GM13977 (cell line): ENCODE measurements at regions of chrX and their contacts with region 1.

Region 1: DNA sequence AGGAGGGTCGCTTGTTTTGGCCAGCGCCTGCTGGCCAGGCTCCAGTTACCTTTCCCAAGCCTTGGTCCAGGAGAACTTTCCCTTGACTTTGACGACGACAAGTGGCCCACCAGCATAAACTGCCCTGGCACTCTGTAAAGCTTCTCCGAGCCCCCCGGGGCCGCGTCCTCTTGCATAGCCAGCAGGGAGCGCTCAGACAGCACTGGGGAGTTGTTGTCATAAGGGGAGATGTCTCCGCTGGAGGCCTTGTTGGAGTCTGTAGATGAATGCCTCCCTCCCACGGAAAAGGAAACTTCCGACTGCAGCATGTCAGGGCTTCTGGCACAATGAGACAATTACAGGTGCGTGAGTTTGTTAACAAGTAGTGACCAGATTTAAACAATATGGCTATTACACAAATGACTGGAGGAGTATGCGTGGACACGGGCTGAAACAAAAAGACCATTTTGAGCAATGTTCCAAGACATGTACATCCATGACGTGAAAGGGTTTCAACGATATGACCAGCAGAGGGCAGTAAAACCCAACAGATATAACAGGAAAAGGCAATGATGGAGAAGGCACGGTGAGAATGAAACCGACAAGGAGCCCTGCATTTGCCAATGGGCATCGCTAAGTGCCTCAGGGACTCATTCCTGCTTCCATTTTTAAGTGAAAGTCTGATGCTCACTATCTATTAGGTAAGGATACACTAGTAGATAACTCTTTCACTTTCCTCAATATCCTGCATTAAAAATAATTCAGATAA is 33.0 kb downstream of the HCCS start:
- DNase-seq: peak; percentile 75
- CTCF ChIP-seq: peak; percentile 72

Region 2: GRCh38 chrX:11040405-11040804 is 103.7 kb before region 1 on chrX:
- in situ Hi-C with region 1: no loop called
- DNase-seq: no peak
- CTCF ChIP-seq: no peak

Region 3: DNA sequence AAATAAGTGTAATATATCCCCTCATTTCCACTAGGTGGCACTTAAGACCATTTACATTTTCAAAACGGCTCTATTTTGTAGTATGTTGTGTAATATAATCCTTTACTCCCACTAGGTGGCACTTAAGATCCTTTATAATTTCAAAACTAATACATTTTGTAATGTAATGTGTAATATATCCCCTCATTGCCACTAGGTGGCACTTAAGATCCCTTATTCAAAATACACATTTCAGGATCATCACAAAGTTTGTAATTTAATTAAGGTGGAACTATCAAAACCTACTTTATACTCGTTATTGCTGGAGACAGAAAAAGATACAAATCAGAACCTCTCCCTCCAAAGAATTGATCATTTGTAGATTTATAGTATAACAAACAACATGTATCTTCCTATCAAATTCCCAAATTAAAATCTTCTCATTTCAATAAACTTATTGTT is 389.1 kb after region 1 on chrX:
- in situ Hi-C with region 1: loop called (anchors 25 kb)
- DNase-seq: peak; percentile 56
- CTCF ChIP-seq: peak; percentile 66

Region 4: GRCh38 chrX:11609109-11609730 is 465.1 kb after region 1 on chrX:
- in situ Hi-C with region 1: no loop called
- DNase-seq: no peak
- CTCF ChIP-seq: no peak

Region 5: DNA sequence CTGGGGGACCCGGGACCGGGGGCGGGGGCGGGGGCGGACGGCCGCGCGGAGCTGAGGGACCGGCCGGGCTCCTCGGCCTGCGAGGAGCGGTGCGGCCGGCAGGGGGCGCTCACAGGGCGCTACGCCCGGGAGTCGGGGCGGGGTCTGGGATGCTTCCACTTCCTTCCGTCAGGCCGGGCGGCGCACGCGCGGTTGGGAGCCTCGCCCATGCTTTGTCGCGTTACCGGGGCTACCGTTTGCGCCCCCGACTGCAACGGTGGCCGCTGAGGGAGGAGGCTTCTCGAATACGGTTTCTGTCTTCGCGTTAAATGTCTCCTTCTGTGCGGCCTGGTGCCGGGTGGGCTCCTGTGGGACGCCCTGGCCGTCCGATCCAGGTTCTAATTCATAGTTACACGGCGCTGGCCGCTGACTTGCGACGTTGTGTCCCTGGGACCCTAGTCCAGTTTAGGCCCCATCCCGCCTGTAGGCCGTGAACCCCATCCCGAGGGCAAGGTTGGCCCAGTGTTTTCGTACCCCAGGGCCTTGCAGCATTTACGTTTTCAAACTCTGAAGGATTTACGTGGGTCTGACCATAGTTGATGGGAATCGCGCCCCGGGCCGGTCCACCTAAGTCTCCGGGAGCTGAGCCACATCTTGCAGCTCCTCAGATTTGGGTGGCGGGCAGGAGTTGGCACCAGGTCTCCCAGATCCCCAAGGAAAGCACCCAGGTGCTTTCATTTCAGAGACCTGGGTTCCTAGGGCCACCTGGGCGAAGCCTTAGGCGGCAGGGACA is 614.5 kb after region 1 on chrX:
- in situ Hi-C with region 1: loop called (anchors 25 kb)
- DNase-seq: peak; percentile 84
- CTCF ChIP-seq: peak; percentile 62